Motor neuron (in vitro differentiated cells): ENCODE measurements at regions of chr7 and their contacts with region 1.

Region 1: DNA sequence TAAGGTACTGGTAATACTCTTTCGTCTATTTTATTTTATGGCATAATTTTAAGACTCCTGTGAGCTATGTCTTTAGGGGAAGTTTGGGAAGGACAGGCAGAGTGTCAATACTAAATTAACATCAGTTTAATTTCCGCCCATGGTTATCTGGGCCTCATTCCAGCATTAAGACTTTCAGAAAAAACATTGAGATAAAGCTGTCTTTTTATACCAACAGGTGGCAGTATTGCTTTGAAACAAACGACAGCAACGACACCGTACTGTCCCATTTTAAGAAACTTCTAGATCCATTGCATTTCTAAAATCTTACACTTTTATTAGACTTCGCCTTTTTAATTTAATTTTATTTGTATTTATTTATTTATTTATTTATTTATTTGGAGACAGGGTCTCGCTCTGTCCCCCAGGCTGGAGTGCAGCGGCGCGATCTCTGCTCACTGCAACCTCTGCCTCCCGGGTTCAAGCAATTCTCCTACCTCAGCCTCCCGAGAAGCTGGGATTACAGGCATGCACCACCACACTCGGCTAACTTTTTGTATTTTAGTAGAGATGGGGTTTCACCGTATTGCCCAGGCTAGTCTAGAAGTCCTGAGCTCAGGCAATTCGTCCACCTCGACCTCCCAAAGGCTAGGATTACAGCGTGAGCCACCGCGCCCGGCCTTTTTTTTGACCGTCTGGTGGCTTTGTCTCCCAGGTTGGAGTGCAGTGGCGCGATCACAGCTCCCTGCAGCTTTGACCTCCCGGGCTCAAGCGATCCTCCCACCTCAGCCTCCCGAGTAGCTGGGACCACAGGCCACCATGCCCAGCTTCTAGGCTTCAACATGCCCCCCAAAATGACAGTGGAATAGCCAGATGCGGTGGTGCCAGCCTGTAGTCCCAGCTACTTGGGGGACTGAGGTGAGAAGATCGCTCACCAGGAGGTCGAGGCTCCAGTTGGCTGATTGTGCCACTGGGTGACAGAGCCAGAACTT is 78.7 kb upstream of the C1GALT1 start:
- ATAC-seq: peak in 3 of 8 experiments; percentile 46 to 63 (median 50)
- H3K4me3 ChIP-seq: no peak overlapping the region
- H3K27ac ChIP-seq: no peak overlapping the region
- H3K4me1 ChIP-seq: peaks cover 12% of the 10 kb centered on the region in 2 donors

Region 2: GRCh38 chr7:7257899-7258692 is 154.5 kb after region 1 on chr7:
- in situ Hi-C with region 1: no loop called
- ATAC-seq: no peak
- H3K4me3 ChIP-seq: no peak overlapping the region
- H3K27ac ChIP-seq: no peak overlapping the region
- H3K4me1 ChIP-seq: no peaks in the 10 kb centered on the region

Region 3: GRCh38 chr7:7352845-7353244 is 249.2 kb after region 1 on chr7:
- in situ Hi-C with region 1: loop called in 1 of 9 experiments (anchors 25 kb)
- ATAC-seq: no peak
- H3K4me3 ChIP-seq: no peak overlapping the region
- H3K27ac ChIP-seq: no peak overlapping the region
- H3K4me1 ChIP-seq: no peaks in the 10 kb centered on the region

Region 4: GRCh38 chr7:7529328-7529727 is 425.7 kb after region 1 on chr7:
- in situ Hi-C with region 1: loop called in 2 of 9 experiments (anchors 25 kb)
- ATAC-seq: peak in 3 of 8 experiments; percentile 16 to 81 (median 71)
- H3K4me3 ChIP-seq: no peak overlapping the region
- H3K27ac ChIP-seq: no peak overlapping the region
- H3K4me1 ChIP-seq: no peaks in the 10 kb centered on the region

Region 5: DNA sequence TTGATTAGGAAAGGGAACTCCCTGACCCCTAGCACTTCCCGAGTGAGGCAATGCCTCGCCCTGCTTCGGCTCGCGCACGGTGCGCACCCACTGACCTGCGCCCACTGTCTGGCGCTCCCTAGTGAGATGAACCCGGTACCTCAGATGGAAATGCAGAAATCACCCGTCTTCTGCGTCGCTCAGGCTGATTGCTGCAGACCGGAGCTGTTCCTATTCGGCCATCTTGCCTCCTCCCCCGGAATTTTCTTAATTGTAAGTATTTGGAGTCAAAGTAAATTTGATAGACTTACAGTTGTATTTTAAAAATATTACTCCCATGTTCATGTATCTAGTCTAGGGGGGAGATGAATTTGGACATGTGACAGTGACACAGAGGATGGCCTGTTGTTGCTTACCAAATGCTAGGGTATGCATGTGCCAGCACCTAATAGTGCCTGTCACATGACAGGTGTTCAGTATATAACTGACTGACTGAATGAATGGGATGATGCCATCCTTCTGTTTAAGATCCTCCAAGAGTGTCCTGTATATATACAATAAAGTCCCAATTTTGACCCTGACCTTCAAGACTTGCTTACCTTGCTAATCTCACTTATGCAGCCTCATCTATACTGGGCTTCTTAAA is 1200.4 kb after region 1 on chr7:
- in situ Hi-C with region 1: loop called in 1 of 9 experiments (anchors 25 kb)
- ATAC-seq: peak in 4 of 8 experiments; percentile 28 to 85 (median 72)
- H3K4me3 ChIP-seq: peak overlapping the region in 4 of 5 donors; percentile 4 to 29 (median 19)
- H3K27ac ChIP-seq: peak overlapping the region; percentile 18 to 42
- H3K4me1 ChIP-seq: peaks cover 0 to 3% of the 10 kb centered on the region in 2 donors